ENCODE measurements at regions of chr9 and their contacts with region 1.

Region 1: DNA sequence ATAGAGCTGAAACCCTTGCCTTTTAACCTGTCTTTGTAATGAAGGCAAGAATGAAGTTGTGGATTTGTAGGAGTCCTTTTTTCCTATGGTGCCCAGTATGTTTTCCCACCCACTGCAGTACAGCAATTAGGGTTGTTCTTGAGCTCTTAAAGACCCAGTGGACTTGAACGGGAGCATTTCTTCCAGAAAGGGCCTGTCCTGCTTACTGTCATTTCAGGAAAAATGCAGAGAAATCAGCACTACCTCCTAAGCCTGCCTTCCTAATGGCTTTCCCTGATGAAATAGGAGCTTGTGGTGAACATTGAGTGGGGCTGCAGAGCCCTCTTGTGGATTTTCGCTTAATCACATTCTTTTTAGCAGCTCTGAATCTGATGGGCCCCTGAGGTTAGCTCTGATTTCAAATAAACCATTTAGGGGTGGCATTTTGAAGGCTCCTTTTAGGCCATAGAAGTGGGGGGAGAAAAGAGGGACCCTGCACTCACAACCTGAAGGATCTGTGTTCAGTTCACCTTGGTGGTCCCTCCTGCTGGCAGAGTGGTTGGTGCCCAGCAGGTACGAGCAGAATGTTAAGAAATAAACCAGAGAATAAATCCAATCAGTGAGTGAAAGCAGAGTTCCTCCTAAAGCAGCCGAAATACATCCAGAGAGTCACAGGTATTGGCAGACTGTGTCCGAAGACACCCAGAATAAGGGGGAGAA is 188.0 kb upstream of the KLF9 start:
- DNase-seq: peak; percentile 41 to 74 (median 53)
- H3K4me3 ChIP-seq: no peak overlapping the region
- H3K27ac ChIP-seq: peak overlapping the region; percentile 74 to 85
- H3K4me1 ChIP-seq: peaks cover 11% of the 10 kb centered on the region
- H3K27me3 ChIP-seq: no peaks in the 10 kb centered on the region
- CTCF ChIP-seq: peak; percentile 61 to 92 (median 78)
- EP300 ChIP-seq: no peak
- POLR2A ChIP-seq: no peak

Region 2: DNA sequence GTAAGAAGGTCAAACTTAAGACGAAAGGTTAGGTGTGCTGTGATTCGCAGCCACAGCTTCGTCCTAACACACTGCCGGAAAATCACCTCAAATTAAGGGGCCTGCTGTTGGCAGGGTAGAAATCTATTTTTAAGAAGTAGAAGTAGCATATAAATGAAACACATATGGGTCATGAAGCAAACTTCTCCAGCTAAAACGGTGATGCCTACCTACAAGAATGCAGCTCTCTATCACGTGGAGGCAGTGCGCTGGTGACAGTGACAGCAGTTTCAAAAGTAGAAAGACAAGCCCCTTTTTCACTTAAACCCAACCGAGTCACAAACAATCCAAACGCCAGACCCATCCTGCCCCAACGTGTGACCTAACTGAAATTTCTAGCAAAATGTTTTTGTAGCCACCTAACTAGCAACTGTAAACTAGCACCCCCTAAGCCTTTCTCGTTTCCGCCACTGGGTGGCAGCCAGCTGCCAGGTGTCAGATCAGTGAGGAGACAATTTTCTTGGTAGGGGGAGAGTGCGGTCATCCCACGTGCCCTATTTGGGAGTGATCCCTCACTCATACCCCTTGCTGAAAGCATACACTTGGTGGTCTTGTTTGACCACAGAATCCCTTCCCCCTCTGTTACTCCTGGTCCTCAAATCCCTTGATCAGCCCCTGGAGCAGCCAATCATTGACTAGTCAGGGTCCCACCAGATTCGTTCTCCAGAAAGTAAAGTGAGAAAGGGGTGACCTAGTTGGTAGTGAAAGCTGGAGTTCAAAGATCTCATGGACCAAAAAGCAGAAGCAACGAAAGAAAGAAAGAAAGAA is 630.6 kb before region 1 on chr9:
- intact Hi-C with region 1: loop called in 1 of 4 experiments (anchors 10 kb)
- DNase-seq: peak; percentile 81 to 89 (median 84)
- H3K4me3 ChIP-seq: no peak overlapping the region
- H3K27ac ChIP-seq: no peak overlapping the region
- H3K4me1 ChIP-seq: no peaks in the 10 kb centered on the region
- H3K27me3 ChIP-seq: no peaks in the 10 kb centered on the region
- CTCF ChIP-seq: peak; percentile 64 to 89 (median 83)
- EP300 ChIP-seq: no peak
- POLR2A ChIP-seq: no peak

Region 3: GRCh38 chr9:70352802-70353201 is 249.7 kb before region 1 on chr9:
- intact Hi-C with region 1: loop called in 2 of 4 experiments (anchors 10 kb)
- DNase-seq: no peak
- H3K4me3 ChIP-seq: no peak overlapping the region
- H3K27ac ChIP-seq: no peak overlapping the region
- H3K4me1 ChIP-seq: peaks cover 2% of the 10 kb centered on the region
- H3K27me3 ChIP-seq: peaks cover 2% of the 10 kb centered on the region
- CTCF ChIP-seq: peak in 2 of 3 donors; percentile 32 to 61
- EP300 ChIP-seq: no peak
- POLR2A ChIP-seq: no peak

Region 4: DNA sequence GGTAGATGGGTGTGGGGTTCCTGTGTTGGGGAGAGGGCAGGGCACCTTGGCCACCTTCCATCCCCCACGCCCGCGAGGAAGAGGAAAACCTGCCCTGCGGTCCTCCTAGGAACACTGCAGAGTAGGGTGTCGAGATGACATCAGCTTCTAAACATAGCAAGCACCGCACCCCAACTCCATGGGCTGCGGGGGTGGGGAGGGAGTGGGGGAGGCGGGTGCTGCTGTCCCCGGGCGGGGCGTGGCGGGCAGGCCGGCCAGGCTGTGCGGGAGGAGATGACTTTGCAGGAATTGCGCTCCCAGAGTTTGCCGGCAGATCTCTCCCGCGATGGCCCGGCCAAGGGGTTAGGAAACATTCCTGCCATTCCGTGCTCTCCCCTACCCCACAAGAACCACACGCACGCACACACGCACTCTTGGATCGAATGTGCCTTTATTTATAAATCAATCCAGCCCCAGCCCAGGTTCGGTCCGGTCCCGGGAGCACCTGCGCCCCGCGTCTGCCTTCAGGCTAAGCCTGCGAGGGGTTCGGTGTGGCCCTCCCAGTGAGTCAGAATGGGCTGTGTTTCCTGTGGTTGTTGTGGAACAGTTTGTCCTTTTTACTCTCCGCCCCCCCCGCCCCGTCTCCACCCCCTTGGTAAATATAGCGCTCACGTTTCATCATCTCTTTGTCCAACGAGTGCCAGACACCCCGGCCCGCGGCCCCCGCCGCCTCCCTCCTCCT is 182.8 kb before region 1 on chr9:
- intact Hi-C with region 1: loop called in 2 of 4 experiments (anchors 1 to 2 kb)
- DNase-seq: peak; percentile 92 to 98 (median 96)
- H3K4me3 ChIP-seq: peak overlapping the region; percentile 60
- H3K27ac ChIP-seq: peak overlapping the region; percentile 97 to 100
- H3K4me1 ChIP-seq: peaks cover 16% of the 10 kb centered on the region
- H3K27me3 ChIP-seq: no peaks in the 10 kb centered on the region
- CTCF ChIP-seq: peak in 1 of 3 donors; percentile 18
- EP300 ChIP-seq: peak; percentile 94
- POLR2A ChIP-seq: peak; percentile 78